PC-3 (cell line): ENCODE measurements at regions of chr6 and their contacts with region 1.

Region 1: GRCh38 chr6:48747069-48747870 is 636.3 kb upstream of the PTCHD4 start:
- DNase-seq: peak; percentile 85
- ATAC-seq: peak; percentile 95
- H3K4me3 ChIP-seq: no peak overlapping the region
- H3K27ac ChIP-seq: peak overlapping the region; percentile 81
- H3K4me1 ChIP-seq: peaks cover 35% of the 10 kb centered on the region
- H3K27me3 ChIP-seq: no peaks in the 10 kb centered on the region
- CTCF ChIP-seq: no peak

Region 2: DNA sequence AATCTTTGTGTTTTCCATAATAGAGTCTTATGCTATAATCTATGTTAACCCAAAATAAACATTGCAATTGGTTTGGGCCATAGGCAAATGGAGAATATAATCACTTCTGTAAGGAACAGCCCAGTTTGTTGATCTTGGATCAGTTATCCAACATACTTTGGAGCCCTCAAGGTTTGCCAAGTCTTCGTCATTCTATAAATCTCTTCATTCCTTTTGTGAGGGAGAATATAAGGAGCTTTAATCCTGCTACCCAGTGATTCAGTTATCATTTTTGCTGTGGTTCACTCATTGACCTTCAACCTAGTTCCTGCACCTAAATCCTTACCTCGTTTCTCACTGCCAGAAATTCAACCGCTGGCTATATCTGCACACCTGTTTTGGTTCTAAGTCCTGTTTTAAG is 135.9 kb before region 1 on chr6:
- CTCF ChIA-PET with region 1: no interaction called
- POLR2A ChIA-PET with region 1: interaction called, 13 read pairs
- intact Hi-C with region 1: loop called (anchors 10 kb)
- DNase-seq: peak; percentile 92
- ATAC-seq: peak; percentile 92
- H3K4me3 ChIP-seq: no peak overlapping the region
- H3K27ac ChIP-seq: peak overlapping the region; percentile 56
- H3K4me1 ChIP-seq: peaks cover 15% of the 10 kb centered on the region
- H3K27me3 ChIP-seq: no peaks in the 10 kb centered on the region
- CTCF ChIP-seq: no peak

Region 3: DNA sequence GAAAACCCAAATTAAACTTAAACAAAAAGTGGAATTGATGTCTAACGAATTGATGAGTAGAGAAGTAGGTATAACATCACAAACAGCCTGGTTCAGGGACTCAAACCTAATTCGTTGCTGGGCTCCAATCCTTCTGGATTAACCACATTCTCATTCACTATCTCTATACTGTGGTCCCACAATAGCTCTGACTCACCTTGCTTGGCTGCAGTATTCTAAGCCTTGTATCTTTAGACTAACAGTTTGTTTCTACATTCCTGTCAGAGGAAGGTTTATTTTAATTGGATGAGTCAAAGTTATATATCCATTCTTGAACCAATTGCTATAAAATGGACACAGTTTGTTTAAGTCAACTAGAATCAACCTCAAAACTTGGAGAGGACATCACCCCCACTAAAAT is 105.7 kb before region 1 on chr6:
- CTCF ChIA-PET with region 1: no interaction called
- POLR2A ChIA-PET with region 1: no interaction called
- intact Hi-C with region 1: loop called (anchors 5 kb)
- DNase-seq: peak; percentile 78
- ATAC-seq: peak; percentile 56
- H3K4me3 ChIP-seq: no peak overlapping the region
- H3K27ac ChIP-seq: no peak overlapping the region
- H3K4me1 ChIP-seq: peaks cover 5% of the 10 kb centered on the region; the same call in 1 of the 2 replicates
- H3K27me3 ChIP-seq: no peaks in the 10 kb centered on the region
- CTCF ChIP-seq: no peak

Region 4: GRCh38 chr6:48775157-48775556 is 27.9 kb after region 1 on chr6:
- CTCF ChIA-PET with region 1: no interaction called
- POLR2A ChIA-PET with region 1: no interaction called
- intact Hi-C with region 1: no loop called
- DNase-seq: peak; percentile 53
- ATAC-seq: peak; percentile 51
- H3K4me3 ChIP-seq: no peak overlapping the region
- H3K27ac ChIP-seq: no peak overlapping the region
- H3K4me1 ChIP-seq: peaks cover 8% of the 10 kb centered on the region
- H3K27me3 ChIP-seq: no peaks in the 10 kb centered on the region
- CTCF ChIP-seq: no peak

Region 5: GRCh38 chr6:48798296-48798695 is 51.0 kb after region 1 on chr6:
- CTCF ChIA-PET with region 1: no interaction called
- POLR2A ChIA-PET with region 1: no interaction called
- intact Hi-C with region 1: no loop called
- DNase-seq: no peak
- ATAC-seq: no peak
- H3K4me3 ChIP-seq: no peak overlapping the region
- H3K27ac ChIP-seq: no peak overlapping the region
- H3K4me1 ChIP-seq: peaks cover 10% of the 10 kb centered on the region; the same call in 1 of the 2 replicates
- H3K27me3 ChIP-seq: no peaks in the 10 kb centered on the region
- CTCF ChIP-seq: no peak